WTC11 (cell line): ENCODE measurements at regions of chr1 and their contacts with region 1.

Region 1: DNA sequence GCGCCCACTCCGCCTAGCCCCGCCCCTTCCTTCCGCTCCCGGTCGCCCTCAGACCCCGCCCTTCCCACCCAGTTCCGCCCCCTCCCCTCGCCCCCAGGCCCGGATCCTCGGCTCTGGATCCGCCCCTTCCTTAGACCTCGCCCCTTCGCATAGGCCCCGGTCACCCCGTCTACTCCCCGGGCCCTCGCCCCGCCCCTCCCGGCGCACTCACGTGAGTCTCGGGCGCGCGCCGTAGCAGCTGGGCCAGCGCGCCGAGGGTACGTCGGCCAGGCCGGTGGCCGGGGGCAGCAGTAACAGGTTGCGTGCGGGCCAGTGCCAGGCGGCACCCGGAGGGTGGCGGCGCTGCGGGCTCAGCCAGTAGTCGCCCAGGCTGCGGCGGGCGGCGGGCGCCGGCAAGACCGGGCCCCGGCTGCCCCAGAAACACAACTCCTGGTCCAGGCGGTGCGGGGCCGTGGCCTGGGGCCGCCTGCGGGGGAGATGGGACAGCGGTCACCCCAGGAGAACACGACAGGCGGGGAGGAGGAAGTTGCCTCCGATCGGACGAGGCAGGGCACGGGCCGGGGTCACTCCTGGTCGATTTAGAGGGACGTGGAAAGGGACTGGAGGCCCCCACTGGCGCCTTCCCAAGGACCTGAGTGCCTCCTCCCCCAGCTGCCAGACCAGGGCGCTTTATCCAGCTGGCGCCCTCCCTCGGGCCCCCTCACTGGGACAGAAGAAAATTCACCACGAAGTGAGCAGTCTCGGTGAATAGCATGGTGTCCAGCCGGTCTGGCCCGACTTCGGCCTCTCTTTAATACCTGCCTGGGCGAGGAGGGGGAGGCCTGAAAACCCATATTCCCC is 10.7 kb downstream of the FAM229A start:
- DNase-seq: peak; percentile 96
- ATAC-seq: peak; percentile 96
- H3K4me3 Mint-ChIP-seq: peak overlapping the region; percentile 80
- H3K27ac Mint-ChIP-seq: peak overlapping the region; percentile 84; the same call in 1 of the 2 replicates
- H3K4me1 Mint-ChIP-seq: peaks cover 18% of the 10 kb centered on the region
- H3K27me3 Mint-ChIP-seq: peaks cover 55% of the 10 kb centered on the region
- CTCF ChIP-seq: no peak

Region 2: DNA sequence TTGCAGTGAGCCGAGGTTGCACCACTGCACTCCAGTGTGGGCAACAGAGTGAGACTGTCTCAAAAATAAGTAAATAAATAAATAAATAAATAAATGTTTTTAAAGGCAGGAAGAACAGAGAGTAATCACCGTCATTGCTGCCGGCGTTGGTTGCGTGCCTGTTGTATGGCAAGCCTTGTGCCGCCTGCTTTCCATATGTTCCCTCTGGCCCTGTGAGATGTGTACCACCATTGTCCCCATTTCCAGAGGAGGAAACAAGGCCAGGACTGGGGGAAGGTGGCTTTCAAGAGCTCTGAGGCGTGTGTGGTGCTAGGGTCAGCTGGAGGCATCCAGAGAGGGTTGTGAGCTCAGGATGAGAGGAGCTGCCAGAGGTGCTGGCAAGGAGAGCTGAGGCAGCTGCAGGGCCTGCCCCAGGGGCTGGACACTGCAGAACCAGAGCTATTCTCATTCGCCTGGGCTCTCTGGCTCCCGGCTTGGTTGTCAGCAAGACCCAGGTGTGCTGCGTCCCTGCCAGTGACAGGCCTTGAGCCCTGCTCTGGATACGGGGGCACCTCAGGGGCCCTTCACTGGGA is 10.3 kb before region 1 on chr1:
- CTCF ChIA-PET with region 1: interaction called, 21 read pairs
- POLR2A ChIA-PET with region 1: interaction called, 18 read pairs
- DNase-seq: no peak
- ATAC-seq: no peak
- H3K4me3 Mint-ChIP-seq: no peak overlapping the region
- H3K27ac Mint-ChIP-seq: no peak overlapping the region
- H3K4me1 Mint-ChIP-seq: peaks cover 19% of the 10 kb centered on the region
- H3K27me3 Mint-ChIP-seq: peaks cover 22% of the 10 kb centered on the region
- CTCF ChIP-seq: no peak